Naive thymus-derived CD4-positive, alpha-beta T cell (primary cell): ENCODE measurements at regions of chr13 and their contacts with region 1.

Region 1: GRCh38 chr13:84712773-84713172 is 830.5 kb upstream of the SLITRK1 start:
- DNase-seq: no peak
- ATAC-seq: no peak
- H3K4me3 ChIP-seq: no peak overlapping the region
- H3K4me3 Mint-ChIP-seq: no peak overlapping the region
- H3K27ac ChIP-seq: no peak overlapping the region
- H3K27ac Mint-ChIP-seq: no peak overlapping the region
- H3K4me1 ChIP-seq: no peaks in the 10 kb centered on the region
- H3K4me1 Mint-ChIP-seq: no peaks in the 10 kb centered on the region
- H3K27me3 ChIP-seq: no peaks in the 10 kb centered on the region
- H3K27me3 Mint-ChIP-seq: no peaks in the 10 kb centered on the region

Region 2: DNA sequence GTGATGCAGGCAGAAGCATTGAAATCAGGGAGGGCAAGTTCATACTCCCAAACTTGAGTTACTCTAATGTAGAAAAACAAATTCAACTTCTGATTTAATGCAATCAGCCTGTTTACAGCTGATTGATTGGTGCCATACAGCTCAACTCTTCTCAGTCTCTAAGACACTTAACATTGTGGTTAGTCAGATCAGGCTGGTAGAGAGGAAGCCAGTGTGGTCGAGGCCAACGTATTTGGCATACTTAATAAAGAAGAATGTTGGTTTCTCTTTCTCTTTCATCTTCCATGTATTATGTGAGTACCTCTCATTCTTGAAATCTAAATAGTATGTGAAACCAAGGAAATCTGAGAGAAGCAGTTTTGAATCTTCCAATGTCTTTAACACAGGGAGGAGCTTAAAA is 575.5 kb before region 1 on chr13:
- CTCF ChIA-PET with region 1: no interaction called
- POLR2A ChIA-PET with region 1: no interaction called
- intact Hi-C with region 1: loop called in 1 of 2 experiments (anchors 10 kb)
- DNase-seq: peak in 8 of 9 donors; percentile 28 to 73 (median 56)
- ATAC-seq: peak; percentile 98
- H3K4me3 ChIP-seq: peak overlapping the region; percentile 33
- H3K4me3 Mint-ChIP-seq: peak overlapping the region; percentile 5 to 81 (median 69)
- H3K27ac ChIP-seq: peak overlapping the region; percentile 5
- H3K27ac Mint-ChIP-seq: peak overlapping the region; percentile 30 to 83 (median 65)
- H3K4me1 ChIP-seq: peaks cover 16 to 22% of the 10 kb centered on the region in 2 donors
- H3K4me1 Mint-ChIP-seq: peaks cover 10 to 47% (median 30%) of the 10 kb centered on the region in 7 donors
- H3K27me3 ChIP-seq: no peaks in the 10 kb centered on the region
- H3K27me3 Mint-ChIP-seq: no peaks in the 10 kb centered on the region